ENCODE measurements at regions of chr5 and their contacts with region 1.

Region 1: DNA sequence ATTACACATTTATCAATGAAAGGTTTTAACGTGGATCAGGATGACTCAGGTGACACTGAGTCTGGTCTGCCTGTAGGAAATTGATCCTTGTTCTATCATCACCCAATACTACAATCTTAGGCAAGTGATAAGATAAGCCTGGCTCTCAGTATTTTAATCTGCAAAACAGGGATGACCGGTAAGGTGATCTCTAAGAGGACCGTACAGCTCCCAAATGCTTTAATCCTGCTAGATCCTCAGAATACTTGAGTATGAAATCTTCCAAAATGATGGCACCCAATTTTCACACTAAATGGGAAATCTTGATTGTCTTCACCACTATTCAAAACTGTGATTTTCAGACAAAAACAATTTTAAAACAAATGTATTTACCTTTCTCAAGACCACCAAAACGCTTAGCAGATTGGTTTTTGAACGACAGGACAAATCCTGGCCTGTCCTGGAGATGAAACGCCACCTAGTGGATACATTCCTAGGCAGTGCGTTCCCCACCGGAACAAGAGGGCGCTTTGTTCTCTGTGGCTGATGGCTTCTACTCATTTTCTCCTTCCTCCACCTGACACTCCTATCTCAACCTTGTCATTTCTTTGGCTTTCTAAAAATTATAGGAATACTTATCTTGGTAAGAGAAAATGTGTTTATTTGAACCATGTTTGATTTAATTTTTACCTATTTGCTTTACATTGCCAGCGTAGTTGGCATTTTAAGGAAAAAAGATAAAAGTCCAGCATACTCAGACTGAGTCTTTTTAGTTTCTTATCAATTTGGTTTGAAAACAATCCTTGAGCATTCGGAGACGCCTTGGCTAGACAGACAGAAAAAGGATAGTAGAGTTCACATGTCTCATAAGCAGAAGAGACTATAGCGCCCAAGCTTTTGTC is 41.2 kb upstream of the VCAN start:
- DNase-seq: peak in 8 of 10 donors; percentile 23 to 92 (median 58)

Region 2: GRCh38 chr5:82885627-82886389 is 544.6 kb before region 1 on chr5:
- intact Hi-C with region 1: loop called (anchors 10 kb)
- DNase-seq: peak in 4 of 10 donors; percentile 3 to 53 (median 36)

Region 3: DNA sequence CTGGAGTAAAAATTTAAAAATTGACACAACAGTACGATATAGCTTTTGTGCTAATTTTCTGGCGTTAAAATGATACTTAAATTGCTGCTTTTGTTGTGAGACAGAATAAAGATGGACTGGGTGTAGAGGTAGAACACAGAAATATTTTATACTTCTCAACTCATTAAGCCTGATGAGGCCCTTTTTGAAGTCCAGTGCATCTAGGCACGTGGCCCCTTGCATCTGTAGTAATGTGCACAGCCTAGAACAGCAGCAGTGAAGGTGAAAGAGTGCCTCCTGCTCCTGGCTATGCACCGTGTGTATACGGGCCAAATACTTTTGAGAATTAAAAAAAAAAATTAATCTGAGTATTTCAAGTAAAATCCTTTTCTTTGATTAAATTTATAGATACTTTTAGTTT is 237.4 kb before region 1 on chr5:
- intact Hi-C with region 1: no loop called
- DNase-seq: no peak

Measured in posterior cingulate gyrus (tissue), 11 donors.